Sciatic nerve (tissue), 2 donors: ENCODE measurements at regions of chr11 and their contacts with region 1.

Region 1: GRCh38 chr11:116938471-116939070 is 101.1 kb upstream of the APOA1 start:
- DNase-seq: no peak
- ATAC-seq: no peak

Region 2: GRCh38 chr11:116240710-116241109 is 697.9 kb before region 1 on chr11:
- intact Hi-C with region 1: loop called (anchors 5 kb)
- DNase-seq: no peak
- ATAC-seq: peak; percentile 38

Region 3: GRCh38 chr11:117072517-117073461 is 134.2 kb after region 1 on chr11:
- intact Hi-C with region 1: no loop called
- DNase-seq: no peak
- ATAC-seq: peak; percentile 86

Region 4: GRCh38 chr11:117178210-117179034 is 239.9 kb after region 1 on chr11 and contains the start of gene SIDT2:
- intact Hi-C with region 1: no loop called
- DNase-seq: peak; percentile 97
- ATAC-seq: peak; percentile 95
- total RNA-seq, gene SIDT2: 94.4 TPM